K562 (cell line): ENCODE measurements at regions of chr18 and their contacts with region 1.

Region 1: DNA sequence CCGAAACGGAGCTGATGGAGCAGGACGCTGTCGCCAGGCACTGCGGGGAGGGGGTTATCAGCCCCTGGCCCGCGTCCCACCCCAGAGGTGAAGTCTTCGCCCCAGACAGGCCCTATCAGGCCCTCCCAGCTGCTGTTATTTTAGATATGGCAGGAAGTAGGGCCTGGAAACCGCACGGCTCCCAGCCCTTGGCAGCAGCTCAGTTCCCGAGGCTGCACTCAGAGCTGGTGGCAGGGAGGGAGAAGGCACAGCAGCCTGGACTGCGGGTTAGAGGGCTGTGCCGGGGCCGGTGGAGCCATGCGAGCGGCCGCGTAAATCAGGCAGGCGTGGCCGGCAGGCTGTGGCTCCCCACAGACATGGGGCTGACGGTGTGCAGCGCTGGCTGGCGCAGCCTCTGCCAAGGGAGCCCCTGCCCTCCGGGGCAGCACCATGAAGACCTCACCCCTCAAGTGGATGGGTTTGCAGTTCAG is 111.4 kb downstream of the NFATC1 start:
- DNase-seq: peak; percentile 71 to 92 (median 82)
- ATAC-seq: peak; percentile 91
- H3K4me3 ChIP-seq: no peak overlapping the region
- H3K27ac ChIP-seq: peak overlapping the region; percentile 79
- H3K4me1 ChIP-seq: peaks cover 52 to 70% of the 10 kb centered on the region in 2 experiments
- H3K27me3 ChIP-seq: no peaks in the 10 kb centered on the region
- CTCF ChIP-seq: no peak
- EP300 ChIP-seq: peak; percentile 88
- POLR2A ChIP-seq: no peak
- RAD21 ChIP-seq: no peak

Region 2: GRCh38 chr18:77993188-77993981 is 1513.7 kb before region 1 on chr18:
- CTCF ChIA-PET with region 1: no interaction called
- POLR2A ChIA-PET with region 1: no interaction called
- in situ Hi-C with region 1: no loop called
- intact Hi-C with region 1: loop called (anchors 10 kb)
- DNase-seq: peak; percentile 42 to 90 (median 58)
- ATAC-seq: peak; percentile 79
- H3K4me3 ChIP-seq: peak overlapping the region; percentile 80
- H3K27ac ChIP-seq: peak overlapping the region; percentile 83
- H3K4me1 ChIP-seq: no peaks in the 10 kb centered on the region; a peak in 2 of 5 replicates
- H3K27me3 ChIP-seq: peaks cover 0 to 5% of the 10 kb centered on the region in 2 experiments; a peak in 3 of 5 replicates
- CTCF ChIP-seq: no peak
- EP300 ChIP-seq: no peak
- POLR2A ChIP-seq: peak; percentile 99
- RAD21 ChIP-seq: no peak

Region 3: GRCh38 chr18:79395761-79396387 is 111.2 kb before region 1 on chr18 and contains the start of gene NFATC1:
- CTCF ChIA-PET with region 1: no interaction called
- POLR2A ChIA-PET with region 1: no interaction called
- in situ Hi-C with region 1: no loop called
- intact Hi-C with region 1: loop called (anchors 5 kb)
- DNase-seq: peak; percentile 72 to 79 (median 77)
- ATAC-seq: peak; percentile 45
- H3K4me3 ChIP-seq: peak within 1 kb of the TSS; percentile 50
- H3K27ac ChIP-seq: peak within 1 kb of the TSS; percentile 55; the same call in 1 of the 3 replicates
- H3K4me1 ChIP-seq: peaks cover 0 to 61% of the 10 kb centered on the region in 2 experiments; a peak in 2 of 5 replicates
- H3K27me3 ChIP-seq: no peaks in the 10 kb centered on the region
- CTCF ChIP-seq: no peak
- EP300 ChIP-seq: no peak
- POLR2A ChIP-seq: no peak
- RAD21 ChIP-seq: no peak
- polyA plus RNA-seq, gene NFATC1: 1.1 to 1.2 TPM